ENCODE measurements at regions of chr12 and their contacts with region 1.

Region 1: GRCh38 chr12:57674691-57675090 is 19.2 kb upstream of the OS9 start:
- DNase-seq: no peak
- H3K4me3 ChIP-seq: no peak overlapping the region
- H3K27ac ChIP-seq: no peak overlapping the region
- H3K4me1 ChIP-seq: no peaks in the 10 kb centered on the region
- H3K27me3 ChIP-seq: no peaks in the 10 kb centered on the region
- CTCF ChIP-seq: no peak

Region 2: GRCh38 chr12:56551070-56551469 is 1123.6 kb before region 1 on chr12:
- CTCF ChIA-PET with region 1: no interaction called
- dilution Hi-C with region 1: no loop called
- in situ Hi-C with region 1: no loop called
- intact Hi-C with region 1: no loop called
- DNase-seq: no peak
- H3K4me3 ChIP-seq: no peak overlapping the region
- H3K27ac ChIP-seq: no peak overlapping the region
- H3K4me1 ChIP-seq: no peaks in the 10 kb centered on the region
- H3K27me3 ChIP-seq: no peaks in the 10 kb centered on the region
- CTCF ChIP-seq: no peak

Region 3: GRCh38 chr12:57708296-57708695 is 33.6 kb after region 1 on chr12:
- CTCF ChIA-PET with region 1: no interaction called
- dilution Hi-C with region 1: loop called (anchors 5 kb)
- in situ Hi-C with region 1: no loop called
- intact Hi-C with region 1: no loop called
- DNase-seq: no peak
- H3K4me3 ChIP-seq: no peak overlapping the region
- H3K27ac ChIP-seq: no peak overlapping the region
- H3K4me1 ChIP-seq: no peaks in the 10 kb centered on the region
- H3K27me3 ChIP-seq: no peaks in the 10 kb centered on the region
- CTCF ChIP-seq: no peak

Region 4: DNA sequence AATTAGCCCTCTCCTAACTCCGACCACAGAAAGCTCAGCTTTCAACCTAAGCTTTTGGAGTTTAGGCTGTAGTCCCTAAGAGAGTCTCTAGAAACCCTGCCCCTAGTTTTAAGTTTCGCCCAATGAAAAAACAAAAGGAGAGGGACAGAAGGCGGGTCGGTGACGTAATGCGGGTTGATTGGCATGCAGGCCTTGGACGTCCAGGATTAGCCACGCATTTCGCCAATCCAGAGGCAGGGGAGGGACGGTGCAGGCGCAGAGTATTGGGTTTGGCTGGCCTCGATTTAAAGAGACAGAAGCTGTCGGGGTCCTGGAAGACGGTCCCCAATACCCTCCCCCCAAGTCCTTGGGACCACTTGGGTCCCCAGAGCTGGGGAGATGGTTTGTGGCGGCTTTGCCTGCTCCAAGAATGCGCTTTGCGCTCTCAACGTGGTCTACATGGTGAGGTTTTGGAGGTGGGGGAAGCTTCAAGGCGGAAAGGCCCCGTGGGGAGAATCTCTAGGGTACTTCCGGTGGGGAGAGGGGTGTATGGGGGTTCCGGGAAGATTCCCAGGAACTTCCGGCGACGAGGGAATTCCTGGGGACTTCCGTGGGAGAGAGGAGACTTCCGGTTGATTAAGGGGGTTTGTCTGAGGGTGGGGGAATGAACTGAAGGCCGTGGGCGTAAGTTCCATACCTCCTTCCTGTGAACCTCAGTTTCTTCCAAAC is 70.2 kb after region 1 on chr12 and contains the start of gene TSPAN31:
- CTCF ChIA-PET with region 1: no interaction called
- dilution Hi-C with region 1: loop called (anchors 5 kb)
- in situ Hi-C with region 1: no loop called
- intact Hi-C with region 1: no loop called
- DNase-seq: peak; percentile 97
- H3K4me3 ChIP-seq: peak within 1 kb of the TSS; percentile 57 to 76 (median 60)
- H3K27ac ChIP-seq: peak within 1 kb of the TSS; percentile 89
- H3K4me1 ChIP-seq: peaks cover 9% of the 10 kb centered on the region
- H3K27me3 ChIP-seq: no peaks in the 10 kb centered on the region
- CTCF ChIP-seq: no peak
- total RNA-seq, gene TSPAN31: 23.6 to 58.3 TPM

Measured in mammary epithelial cell (primary cell).